GM18951 (cell line): ENCODE measurements at regions of chr1 and their contacts with region 1.

Region 1: DNA sequence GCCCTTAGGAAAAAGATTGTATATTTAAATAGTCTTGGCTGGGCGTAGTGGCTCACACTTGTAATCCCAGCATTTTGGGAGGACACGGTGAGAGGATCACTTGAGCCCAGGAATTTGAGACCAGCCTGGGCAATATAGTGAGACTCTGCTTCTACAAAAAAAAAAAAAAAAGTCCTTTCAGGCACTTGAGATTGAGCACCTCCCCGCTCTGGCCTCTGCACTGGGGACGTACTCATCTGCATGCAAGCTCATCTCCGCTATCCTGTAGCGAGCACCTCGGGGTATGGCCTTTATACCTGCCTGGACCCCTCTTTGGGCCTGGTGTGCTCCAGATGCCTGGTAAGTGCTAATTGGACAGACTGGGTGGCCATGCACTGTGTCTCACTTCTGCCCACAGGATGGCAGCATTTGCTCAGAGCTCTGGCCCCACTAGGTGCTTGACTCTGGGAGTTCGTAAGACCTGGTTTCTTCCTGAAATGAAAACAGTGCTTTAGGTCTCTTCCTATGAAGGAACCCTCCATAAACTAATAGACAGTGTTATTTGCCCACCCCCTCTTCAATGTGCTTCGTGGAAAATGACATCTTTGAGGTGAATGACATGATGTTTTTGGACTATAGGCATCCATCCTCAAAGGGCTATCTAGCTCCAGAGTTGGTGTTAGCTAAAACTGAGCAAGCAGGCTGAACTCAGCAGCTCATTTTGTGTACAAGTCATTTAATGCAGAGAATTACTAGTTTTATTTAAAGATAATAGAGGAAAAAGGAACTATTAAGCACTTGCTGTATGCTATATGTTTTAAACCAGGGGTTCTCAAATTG is 61.7 kb upstream of the ADAR start:
- POLR2A ChIP-seq: no peak

Region 2: GRCh38 chr1:154493276-154493675 is 176.4 kb before region 1 on chr1:
- in situ Hi-C with region 1: no loop called
- POLR2A ChIP-seq: no peak

Region 3: DNA sequence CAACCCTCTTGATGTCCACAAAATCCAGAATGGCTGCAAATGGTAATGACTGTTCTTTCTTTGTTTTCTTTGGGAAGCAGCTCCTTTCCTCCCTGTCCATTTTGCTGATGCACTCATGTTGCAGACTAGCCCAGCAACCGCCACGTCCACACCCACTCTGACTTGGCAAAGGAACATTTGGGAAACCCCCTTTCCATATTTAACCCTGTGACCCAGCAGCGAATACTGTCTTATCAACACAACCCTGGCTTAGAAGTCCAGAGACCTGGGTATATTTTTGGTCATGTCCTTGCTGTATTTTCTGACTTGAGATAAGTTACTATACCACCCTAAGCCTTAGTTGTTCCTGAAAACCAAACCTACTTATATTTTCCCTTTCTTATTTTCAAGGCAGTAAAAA is 149.3 kb before region 1 on chr1:
- in situ Hi-C with region 1: no loop called
- POLR2A ChIP-seq: no peak

Region 4: DNA sequence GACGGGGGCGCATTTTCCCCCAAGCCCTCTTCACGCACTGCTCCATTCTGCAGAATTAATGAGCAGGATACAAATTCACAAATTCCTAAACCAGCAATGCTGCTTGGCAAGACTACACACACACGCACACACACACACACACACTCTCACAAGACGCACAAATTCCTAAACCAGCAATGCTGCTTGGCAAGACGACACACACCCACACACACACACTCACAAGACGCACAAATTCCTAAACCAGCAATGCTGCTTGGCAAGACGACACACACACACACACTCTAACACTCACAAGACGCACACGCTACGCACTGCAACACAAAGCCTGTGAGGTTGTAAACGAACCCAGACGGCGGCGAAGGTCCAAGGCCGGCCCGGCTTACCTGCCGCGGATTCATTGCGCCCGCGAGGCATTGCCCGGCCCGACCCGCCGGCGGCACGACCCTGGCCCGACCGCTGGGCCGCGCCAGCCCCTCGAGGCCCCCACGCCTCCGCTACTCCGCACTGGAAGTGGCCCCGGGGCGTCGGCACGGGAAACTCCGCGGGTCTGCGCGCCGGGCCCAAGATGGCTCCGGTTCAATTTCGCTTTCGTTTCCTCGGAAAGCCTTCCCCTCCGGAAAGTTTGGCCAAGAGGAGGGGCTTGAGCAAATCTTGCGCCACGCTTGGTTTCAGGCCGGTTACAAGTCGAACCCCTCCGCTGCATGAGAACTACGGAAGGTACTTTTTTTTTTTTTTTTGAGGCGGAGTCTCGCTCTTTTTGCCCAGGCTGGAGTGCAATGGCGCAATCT is 61.9 kb before region 1 on chr1 and contains the start of gene ADAR:
- in situ Hi-C with region 1: no loop called
- POLR2A ChIP-seq: peak; percentile 82

Region 5: GRCh38 chr1:154751690-154752089 is 82.0 kb after region 1 on chr1:
- in situ Hi-C with region 1: loop called (anchors 10 kb)
- POLR2A ChIP-seq: no peak

Region 6: DNA sequence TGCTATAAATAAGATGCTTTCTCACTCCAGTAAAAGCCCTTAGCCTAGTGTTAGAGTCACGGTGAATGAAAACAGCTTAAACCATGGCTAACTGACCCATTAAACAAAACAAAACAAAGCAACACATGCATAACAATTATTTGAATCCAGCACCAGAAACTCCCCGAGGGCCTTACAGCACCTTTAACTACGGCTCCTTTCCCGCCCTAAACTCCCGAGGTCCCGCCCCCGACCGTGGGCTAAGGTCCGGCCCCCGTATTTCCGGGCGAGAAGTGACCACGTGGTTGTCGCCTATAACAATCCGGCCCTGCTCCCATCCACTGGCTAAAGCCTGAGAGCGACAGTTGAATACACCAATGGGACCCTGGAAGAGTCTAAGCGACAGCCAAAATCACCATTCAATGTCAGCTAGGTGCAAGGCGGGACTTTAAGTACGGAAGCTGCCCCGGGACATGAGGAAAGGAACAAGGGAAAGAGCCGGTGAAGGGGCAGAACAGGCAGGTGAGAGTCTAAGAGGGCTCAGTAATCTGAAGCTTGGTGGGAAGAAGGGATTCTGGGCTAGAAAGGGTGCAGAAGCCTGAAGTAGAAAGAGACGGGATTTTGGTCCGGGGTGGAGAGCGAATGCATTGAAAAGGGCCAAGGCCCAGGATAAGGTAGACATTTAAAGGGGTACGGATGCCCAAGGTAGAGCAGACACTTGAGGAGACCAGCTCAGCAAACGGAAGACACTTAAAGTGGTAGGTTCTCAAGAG is 313.4 kb after region 1 on chr1 and contains the start of gene FLAD1:
- in situ Hi-C with region 1: no loop called
- POLR2A ChIP-seq: peak; percentile 75